Mammary epithelial cell (primary cell): ENCODE measurements at regions of chr3 and their contacts with region 1.

Region 1: GRCh38 chr3:183560607-183561006 is 5.1 kb upstream of the KLHL6 start:
- DNase-seq: peak; percentile 36
- H3K4me3 ChIP-seq: no peak overlapping the region
- H3K27ac ChIP-seq: no peak overlapping the region
- H3K4me1 ChIP-seq: peaks cover 4% of the 10 kb centered on the region
- H3K27me3 ChIP-seq: no peaks in the 10 kb centered on the region
- CTCF ChIP-seq: peak in 1 of 2 donors; percentile 58

Region 2: GRCh38 chr3:183481582-183481981 is 79.0 kb before region 1 on chr3:
- CTCF ChIA-PET with region 1: no interaction called
- dilution Hi-C with region 1: no loop called
- in situ Hi-C with region 1: no loop called
- intact Hi-C with region 1: loop called (anchors 5 kb)
- DNase-seq: peak; percentile 92
- H3K4me3 ChIP-seq: no peak overlapping the region
- H3K27ac ChIP-seq: peak overlapping the region; percentile 4
- H3K4me1 ChIP-seq: no peaks in the 10 kb centered on the region
- H3K27me3 ChIP-seq: no peaks in the 10 kb centered on the region
- CTCF ChIP-seq: no peak

Region 3: GRCh38 chr3:183502237-183503181 is 58.1 kb before region 1 on chr3:
- CTCF ChIA-PET with region 1: no interaction called
- dilution Hi-C with region 1: no loop called
- in situ Hi-C with region 1: no loop called
- intact Hi-C with region 1: loop called (anchors 2 kb)
- DNase-seq: no peak
- H3K4me3 ChIP-seq: no peak overlapping the region
- H3K27ac ChIP-seq: no peak overlapping the region
- H3K4me1 ChIP-seq: no peaks in the 10 kb centered on the region
- H3K27me3 ChIP-seq: no peaks in the 10 kb centered on the region
- CTCF ChIP-seq: peak; percentile 8 to 38